Activated B cell treated with CpG ODN at 0.5 μM for 24 hours (primary cell): ENCODE measurements at regions of chr6 and their contacts with region 1.

Region 1: DNA sequence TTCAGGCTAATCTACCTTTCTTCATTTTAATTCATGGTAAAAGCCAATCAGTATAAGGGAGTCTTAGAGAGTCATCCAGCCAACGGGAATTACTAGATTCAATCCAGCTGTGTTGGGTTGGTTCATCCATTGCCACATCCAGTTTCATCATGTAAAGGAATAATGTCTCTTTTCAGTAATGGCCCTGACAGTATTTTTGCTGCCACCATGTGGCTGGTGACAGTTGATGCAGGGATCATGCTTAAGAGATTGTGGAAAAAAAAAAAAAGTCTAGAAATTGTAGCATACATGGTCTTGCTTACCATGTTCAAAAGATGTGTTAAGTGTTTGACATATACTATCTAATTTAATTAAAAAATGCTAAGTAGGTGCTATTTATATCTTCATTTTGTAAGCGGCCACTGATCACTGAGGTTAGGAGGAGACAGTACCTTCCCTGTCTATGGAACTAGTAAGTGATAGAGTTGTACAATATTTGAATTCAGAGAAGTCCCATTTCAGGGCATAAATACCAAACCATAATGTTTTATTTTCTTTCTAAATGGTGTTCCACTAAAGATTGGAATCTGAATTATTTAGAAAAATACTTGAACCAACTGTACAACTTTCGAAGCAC is 135.9 kb downstream of the KHDRBS2 start:
- DNase-seq: no peak
- ATAC-seq: peak; percentile 62
- H3K4me3 Mint-ChIP-seq: no peak overlapping the region
- H3K27ac Mint-ChIP-seq: no peak overlapping the region
- H3K4me1 Mint-ChIP-seq: no peaks in the 10 kb centered on the region
- H3K27me3 Mint-ChIP-seq: no peaks in the 10 kb centered on the region
- CTCF ChIP-seq: no peak

Region 2: GRCh38 chr6:61886608-61887259 is 263.4 kb before region 1 on chr6:
- CTCF ChIA-PET with region 1: interaction called, 22 read pairs
- POLR2A ChIA-PET with region 1: no interaction called
- intact Hi-C with region 1: loop called (anchors 1 kb)
- DNase-seq: no peak
- ATAC-seq: peak; percentile 31
- H3K4me3 Mint-ChIP-seq: no peak overlapping the region
- H3K27ac Mint-ChIP-seq: no peak overlapping the region
- H3K4me1 Mint-ChIP-seq: peaks cover 2% of the 10 kb centered on the region
- H3K27me3 Mint-ChIP-seq: no peaks in the 10 kb centered on the region
- CTCF ChIP-seq: no peak

Region 3: GRCh38 chr6:62202078-62202477 is 51.9 kb after region 1 on chr6:
- CTCF ChIA-PET with region 1: no interaction called
- POLR2A ChIA-PET with region 1: no interaction called
- intact Hi-C with region 1: no loop called
- DNase-seq: no peak
- ATAC-seq: no peak
- H3K4me3 Mint-ChIP-seq: no peak overlapping the region
- H3K27ac Mint-ChIP-seq: no peak overlapping the region
- H3K4me1 Mint-ChIP-seq: peaks cover 18% of the 10 kb centered on the region
- H3K27me3 Mint-ChIP-seq: no peaks in the 10 kb centered on the region
- CTCF ChIP-seq: no peak

Region 4: GRCh38 chr6:62265906-62266525 is 115.9 kb after region 1 on chr6:
- CTCF ChIA-PET with region 1: no interaction called
- POLR2A ChIA-PET with region 1: no interaction called
- intact Hi-C with region 1: no loop called
- DNase-seq: no peak
- ATAC-seq: no peak
- H3K4me3 Mint-ChIP-seq: peak overlapping the region; percentile 5
- H3K27ac Mint-ChIP-seq: no peak overlapping the region
- H3K4me1 Mint-ChIP-seq: peaks cover 34% of the 10 kb centered on the region
- H3K27me3 Mint-ChIP-seq: no peaks in the 10 kb centered on the region
- CTCF ChIP-seq: no peak

Region 5: GRCh38 chr6:62775427-62776022 is 625.4 kb after region 1 on chr6:
- CTCF ChIA-PET with region 1: no interaction called
- POLR2A ChIA-PET with region 1: no interaction called
- intact Hi-C with region 1: loop called (anchors 1 kb)
- DNase-seq: no peak
- ATAC-seq: no peak
- H3K4me3 Mint-ChIP-seq: no peak overlapping the region
- H3K27ac Mint-ChIP-seq: no peak overlapping the region
- H3K4me1 Mint-ChIP-seq: no peaks in the 10 kb centered on the region
- H3K27me3 Mint-ChIP-seq: no peaks in the 10 kb centered on the region
- CTCF ChIP-seq: no peak